ENCODE measurements at regions of chr12 and their contacts with region 1.

Region 1: GRCh38 chr12:4276524-4277204 is 3.1 kb downstream of the CCND2 start:
- DNase-seq: peak; percentile 87
- H3K4me3 ChIP-seq: no peak overlapping the region
- H3K27ac ChIP-seq: no peak overlapping the region
- H3K4me1 ChIP-seq: peaks cover 10% of the 10 kb centered on the region
- H3K27me3 ChIP-seq: peaks cover 49% of the 10 kb centered on the region in 2 experiments
- CTCF ChIP-seq: peak; percentile 80 to 85
- POLR2A ChIP-seq: no peak

Region 2: GRCh38 chr12:3313675-3314663 is 962.7 kb before region 1 on chr12:
- CTCF ChIA-PET with region 1: interaction called, 18 read pairs
- POLR2A ChIA-PET with region 1: no interaction called
- dilution Hi-C with region 1: no loop called
- intact Hi-C with region 1: no loop called
- DNase-seq: peak; percentile 20
- H3K4me3 ChIP-seq: no peak overlapping the region
- H3K27ac ChIP-seq: no peak overlapping the region
- H3K4me1 ChIP-seq: peaks cover 4% of the 10 kb centered on the region
- H3K27me3 ChIP-seq: peaks cover 0 to 1% of the 10 kb centered on the region in 2 experiments
- CTCF ChIP-seq: peak; percentile 10 to 62
- POLR2A ChIP-seq: no peak

Region 3: DNA sequence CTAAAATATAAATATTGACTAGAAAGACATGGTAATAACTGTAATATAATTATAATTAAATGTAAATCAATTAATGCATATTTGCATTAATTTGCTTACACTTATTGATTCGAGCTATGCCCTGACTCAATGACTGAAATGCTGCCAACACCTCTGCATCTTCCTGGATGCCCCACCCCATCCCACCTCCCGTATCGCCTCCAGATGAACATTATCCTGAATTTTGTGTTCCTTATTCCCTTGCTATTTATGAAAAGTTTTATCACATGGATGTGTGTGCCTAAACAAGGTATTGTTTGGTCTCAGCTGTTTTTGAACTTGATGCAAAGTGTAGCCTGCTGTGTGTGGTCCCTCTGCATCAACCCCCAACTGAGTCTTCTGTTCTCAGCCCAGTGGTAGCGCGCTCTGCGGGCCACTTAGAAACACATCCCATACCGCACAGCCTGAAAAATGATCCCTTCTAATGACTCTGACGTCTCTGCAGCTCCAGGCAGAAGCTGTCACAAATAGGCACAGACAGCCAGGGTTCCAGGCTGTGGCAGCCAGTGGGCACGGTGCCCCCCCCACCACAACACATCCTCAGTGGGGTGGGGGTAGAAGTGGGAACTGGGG is 689.2 kb before region 1 on chr12:
- CTCF ChIA-PET with region 1: no interaction called
- POLR2A ChIA-PET with region 1: no interaction called
- dilution Hi-C with region 1: no loop called
- intact Hi-C with region 1: no loop called
- DNase-seq: no peak
- H3K4me3 ChIP-seq: no peak overlapping the region
- H3K27ac ChIP-seq: no peak overlapping the region
- H3K4me1 ChIP-seq: no peaks in the 10 kb centered on the region
- H3K27me3 ChIP-seq: no peaks in the 10 kb centered on the region
- CTCF ChIP-seq: no peak
- POLR2A ChIP-seq: no peak

Region 4: DNA sequence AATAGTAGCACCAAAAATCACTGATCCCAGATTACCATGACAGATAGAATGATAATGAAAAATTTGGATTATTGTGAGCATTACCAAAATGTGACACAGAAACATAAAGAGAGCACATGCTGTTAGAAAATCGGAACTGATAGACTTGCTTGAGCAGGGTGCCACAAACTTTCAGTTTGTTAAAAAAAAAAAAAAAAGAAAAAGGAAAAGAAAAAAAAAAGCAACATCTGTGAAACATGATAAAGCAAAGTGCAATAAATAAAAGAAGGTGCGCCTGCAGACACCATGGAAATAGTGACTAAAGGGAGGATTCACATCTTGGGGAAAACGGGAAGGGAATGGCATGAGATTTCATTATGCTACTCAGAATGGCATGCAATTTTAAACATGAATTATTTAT is 396.8 kb before region 1 on chr12:
- CTCF ChIA-PET with region 1: interaction called, 464 read pairs
- POLR2A ChIA-PET with region 1: no interaction called
- dilution Hi-C with region 1: no loop called
- intact Hi-C with region 1: loop called (anchors 1 kb)
- DNase-seq: no peak
- H3K4me3 ChIP-seq: no peak overlapping the region
- H3K27ac ChIP-seq: no peak overlapping the region
- H3K4me1 ChIP-seq: no peaks in the 10 kb centered on the region
- H3K27me3 ChIP-seq: peaks cover 9 to 11% of the 10 kb centered on the region in 2 experiments
- CTCF ChIP-seq: no peak
- POLR2A ChIP-seq: no peak

Region 5: DNA sequence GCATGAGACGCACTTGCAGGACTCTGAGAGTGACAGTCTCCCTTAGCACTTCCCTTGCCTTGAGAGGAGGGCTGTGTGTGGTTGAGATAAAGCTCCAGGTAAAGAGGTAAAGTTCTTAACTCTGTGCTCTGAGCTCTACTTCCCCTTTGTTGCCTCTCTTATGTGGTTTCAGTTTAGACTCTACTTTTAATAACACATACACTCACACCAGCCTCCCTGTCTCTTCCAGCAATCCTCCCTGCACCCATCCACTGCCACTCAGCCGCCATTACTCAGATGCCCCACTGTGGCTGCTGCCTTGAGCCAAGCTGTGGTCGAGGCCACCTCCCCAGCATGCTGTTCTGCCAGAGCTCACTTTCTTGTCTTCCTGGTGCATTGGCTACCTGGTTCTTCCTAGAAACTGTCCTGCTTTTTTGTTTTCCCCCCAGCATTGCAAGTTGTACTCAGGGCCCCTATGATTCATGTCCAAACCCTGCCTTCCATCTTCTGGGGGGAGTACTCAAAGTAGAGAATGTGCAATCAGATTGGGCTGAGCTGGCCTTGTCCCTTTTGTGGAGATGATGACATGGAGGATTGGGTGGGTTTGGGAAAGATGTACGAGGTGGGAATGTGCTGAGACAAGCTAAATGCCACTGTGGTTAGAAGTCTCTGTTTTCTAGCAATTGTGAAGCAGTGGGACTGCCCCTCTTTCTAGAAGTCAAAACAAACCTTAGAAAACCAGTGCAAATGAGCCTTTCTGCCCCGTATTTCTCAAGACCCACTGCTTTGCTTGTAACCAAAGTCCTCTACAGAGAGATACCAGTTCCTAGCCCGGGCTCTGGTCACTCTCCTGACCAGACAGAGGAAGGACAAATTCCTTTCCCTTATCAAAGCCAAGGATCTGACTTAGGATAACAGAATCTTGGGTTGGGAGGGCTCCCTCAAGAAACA is 287.9 kb before region 1 on chr12:
- CTCF ChIA-PET with region 1: interaction called, 231 read pairs
- POLR2A ChIA-PET with region 1: no interaction called
- dilution Hi-C with region 1: no loop called
- intact Hi-C with region 1: no loop called
- DNase-seq: no peak
- H3K4me3 ChIP-seq: no peak overlapping the region
- H3K27ac ChIP-seq: no peak overlapping the region
- H3K4me1 ChIP-seq: no peaks in the 10 kb centered on the region
- H3K27me3 ChIP-seq: peaks cover 0 to 3% of the 10 kb centered on the region in 2 experiments
- CTCF ChIP-seq: no peak
- POLR2A ChIP-seq: no peak

Region 6: GRCh38 chr12:4030929-4031702 is 245.5 kb before region 1 on chr12:
- CTCF ChIA-PET with region 1: interaction called, 104 read pairs
- POLR2A ChIA-PET with region 1: interaction called, 9 read pairs
- dilution Hi-C with region 1: no loop called
- intact Hi-C with region 1: loop called (anchors 1 kb)
- DNase-seq: peak; percentile 90
- H3K4me3 ChIP-seq: peak overlapping the region in 1 of 3 experiments; percentile 40
- H3K27ac ChIP-seq: no peak overlapping the region
- H3K4me1 ChIP-seq: no peaks in the 10 kb centered on the region
- H3K27me3 ChIP-seq: peaks cover 0 to 2% of the 10 kb centered on the region in 2 experiments
- CTCF ChIP-seq: no peak
- POLR2A ChIP-seq: no peak

Region 7: GRCh38 chr12:4118017-4118510 is 158.6 kb before region 1 on chr12:
- CTCF ChIA-PET with region 1: interaction called, 31 read pairs
- POLR2A ChIA-PET with region 1: no interaction called
- dilution Hi-C with region 1: no loop called
- intact Hi-C with region 1: no loop called
- DNase-seq: no peak
- H3K4me3 ChIP-seq: no peak overlapping the region
- H3K27ac ChIP-seq: no peak overlapping the region
- H3K4me1 ChIP-seq: no peaks in the 10 kb centered on the region
- H3K27me3 ChIP-seq: no peaks in the 10 kb centered on the region
- CTCF ChIP-seq: no peak
- POLR2A ChIP-seq: no peak

Region 8: DNA sequence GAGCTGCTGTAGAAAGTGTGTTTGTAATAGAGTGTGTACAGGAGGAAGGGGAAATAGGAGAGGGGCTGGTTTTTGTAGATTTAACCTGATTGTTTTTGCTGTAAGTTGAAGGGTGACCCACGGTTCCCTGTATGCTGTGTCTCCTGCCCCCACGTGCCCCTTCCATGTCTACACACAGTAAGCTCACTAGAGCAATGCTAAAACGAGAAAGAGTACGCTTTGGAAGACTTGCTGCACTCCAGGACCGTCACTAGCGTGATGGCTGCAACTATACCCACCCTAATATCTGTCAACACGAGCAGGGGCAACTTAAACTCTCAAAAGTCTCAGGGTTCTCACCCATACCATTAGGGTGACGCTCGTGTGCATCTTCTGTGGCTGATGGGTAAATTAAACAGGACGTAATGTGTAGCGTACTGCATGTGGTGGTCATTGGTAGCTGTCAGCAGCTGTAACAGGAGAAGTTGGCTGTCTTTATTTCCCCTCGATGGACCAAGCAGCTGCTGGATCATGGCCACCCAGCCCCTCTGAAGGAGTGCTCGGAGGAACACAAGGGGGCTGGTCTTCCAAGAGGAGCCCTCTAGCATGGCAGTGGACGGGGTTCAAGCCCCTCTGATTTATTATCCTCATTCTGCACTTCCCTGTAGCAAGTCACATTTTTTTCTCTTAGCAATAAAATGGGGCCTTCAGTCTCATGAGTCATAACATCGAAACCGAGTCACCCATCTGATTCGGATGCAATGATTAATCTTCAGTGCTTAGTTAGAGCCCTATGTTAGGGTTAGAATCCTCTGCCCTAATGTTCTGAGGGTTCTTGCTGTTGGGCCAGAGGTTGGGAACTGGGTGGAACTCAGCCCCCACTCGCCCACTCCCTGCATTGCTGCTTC is 10.9 kb after region 1 on chr12:
- CTCF ChIA-PET with region 1: interaction called, 29 read pairs
- POLR2A ChIA-PET with region 1: interaction called, 3 read pairs
- dilution Hi-C with region 1: no loop called
- intact Hi-C with region 1: no loop called
- DNase-seq: no peak
- H3K4me3 ChIP-seq: no peak overlapping the region
- H3K27ac ChIP-seq: no peak overlapping the region
- H3K4me1 ChIP-seq: no peaks in the 10 kb centered on the region
- H3K27me3 ChIP-seq: no peaks in the 10 kb centered on the region
- CTCF ChIP-seq: no peak
- POLR2A ChIP-seq: no peak